Common myeloid progenitor, CD34-positive (primary cell): ENCODE measurements at regions of chr10 and their contacts with region 1.

Region 1: DNA sequence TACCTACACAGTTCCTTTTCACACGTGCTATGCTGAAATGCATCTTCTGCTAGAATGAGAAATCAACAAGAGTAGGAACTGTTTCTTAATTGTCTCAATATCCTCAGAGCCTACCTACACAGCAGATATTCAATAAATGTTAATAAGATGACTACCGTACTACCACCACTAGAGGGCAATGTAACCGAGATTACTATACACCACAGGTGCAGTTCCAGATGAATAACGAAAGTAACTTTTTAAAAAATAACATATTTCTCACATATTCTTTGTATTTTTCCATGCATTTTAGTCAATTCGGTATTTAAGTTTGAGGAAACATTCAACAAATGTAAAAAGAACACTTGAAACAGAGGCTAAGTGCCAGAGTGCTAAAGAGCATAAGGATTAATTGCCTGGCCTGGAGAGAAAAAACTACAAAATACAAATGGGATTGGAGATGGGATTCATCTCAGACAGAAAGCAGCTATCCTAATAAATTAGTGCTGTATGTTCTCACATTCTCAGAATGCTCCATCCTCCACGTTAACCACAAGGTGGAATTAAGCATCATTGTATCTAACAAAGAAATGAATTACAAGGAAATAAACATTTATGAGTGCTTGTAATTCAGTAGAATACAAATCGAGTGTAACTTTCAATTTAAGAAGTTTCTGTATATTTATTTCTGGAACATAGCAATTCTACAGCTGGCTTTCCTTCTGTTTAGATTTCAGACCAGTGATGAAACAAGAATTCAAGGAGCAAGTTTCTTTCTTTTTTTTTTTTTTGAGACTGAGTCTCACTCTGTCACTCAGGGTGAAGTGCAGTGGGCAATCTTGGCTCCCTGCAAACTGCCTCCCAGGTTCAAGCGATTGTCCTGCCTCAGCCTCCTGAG is 20.3 kb upstream of the HECTD2 start:
- DNase-seq: peak; percentile 63 to 84 (median 82)
- H3K4me3 ChIP-seq: peak overlapping the region in 1 of 7 experiments; percentile 55
- H3K27ac ChIP-seq: no peak overlapping the region
- H3K4me1 ChIP-seq: peaks cover 0 to 3% (median 0%) of the 10 kb centered on the region in 4 experiments
- H3K27me3 ChIP-seq: peaks cover 2 to 29% (median 9%) of the 10 kb centered on the region in 5 experiments

Region 2: GRCh38 chr10:91022924-91023699 is 366.8 kb before region 1 on chr10:
- CTCF ChIA-PET with region 1: no interaction called
- POLR2A ChIA-PET with region 1: no interaction called
- DNase-seq: no peak
- H3K4me3 ChIP-seq: no peak overlapping the region
- H3K27ac ChIP-seq: no peak overlapping the region
- H3K4me1 ChIP-seq: no peaks in the 10 kb centered on the region
- H3K27me3 ChIP-seq: no peaks in the 10 kb centered on the region

Region 3: GRCh38 chr10:91287276-91287675 is 102.6 kb before region 1 on chr10:
- CTCF ChIA-PET with region 1: no interaction called
- POLR2A ChIA-PET with region 1: no interaction called
- DNase-seq: no peak
- H3K4me3 ChIP-seq: no peak overlapping the region
- H3K27ac ChIP-seq: no peak overlapping the region
- H3K4me1 ChIP-seq: no peaks in the 10 kb centered on the region
- H3K27me3 ChIP-seq: no peaks in the 10 kb centered on the region

Region 4: DNA sequence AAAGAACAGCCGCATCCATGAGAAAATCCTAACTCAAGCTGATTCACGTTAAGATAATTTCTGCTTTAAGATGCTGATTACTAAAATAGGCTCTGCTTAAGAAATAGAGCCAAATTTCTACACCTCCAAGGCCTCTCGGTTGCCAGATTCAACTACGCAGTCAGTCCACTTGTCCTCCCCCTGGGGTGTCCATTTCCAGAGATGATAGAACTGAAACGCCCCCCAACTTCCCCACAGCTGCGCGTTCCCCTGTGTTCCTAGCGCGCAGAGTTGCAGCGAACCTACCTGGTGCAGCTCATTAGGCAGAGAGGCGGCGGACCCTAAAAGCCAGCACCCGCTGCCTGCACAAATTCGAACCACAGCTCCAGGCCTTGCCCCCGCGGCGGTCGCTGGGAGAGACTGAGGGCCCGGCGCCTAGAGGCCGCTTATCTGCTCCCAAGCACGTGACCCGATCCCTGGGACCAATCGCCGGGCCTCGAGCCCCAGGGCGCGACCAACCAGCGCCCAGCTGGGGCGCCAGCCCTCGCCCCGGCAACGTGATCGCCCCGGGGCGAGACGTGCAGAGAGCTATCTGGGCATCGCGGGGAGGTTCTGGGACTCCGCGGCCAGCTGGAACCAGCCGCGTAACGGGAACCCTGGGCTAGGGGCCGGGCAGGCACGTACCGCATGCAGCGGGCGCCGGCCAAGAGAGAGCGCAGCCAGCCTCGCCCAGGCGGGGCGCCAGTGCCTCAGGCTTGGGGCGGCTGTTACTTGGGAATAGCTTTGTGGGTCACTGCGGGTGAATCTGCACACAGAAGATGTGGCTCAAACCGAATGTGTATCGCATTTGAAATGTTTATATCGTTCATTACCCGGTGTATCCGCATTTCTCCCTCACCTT is 243.0 kb after region 1 on chr10 and contains the start of gene PPP1R3C:
- CTCF ChIA-PET with region 1: interaction called, 10 read pairs
- POLR2A ChIA-PET with region 1: no interaction called
- DNase-seq: peak; percentile 34 to 67 (median 52)
- H3K4me3 ChIP-seq: peak within 1 kb of the TSS; percentile 0 to 65 (median 55)
- H3K27ac ChIP-seq: no peak within 1 kb of the TSS
- H3K4me1 ChIP-seq: peaks cover 0 to 13% (median 12%) of the 10 kb centered on the region in 4 experiments
- H3K27me3 ChIP-seq: peaks cover 19 to 51% (median 22%) of the 10 kb centered on the region in 5 experiments